CD4-positive, alpha-beta memory T cell (primary cell): ENCODE measurements at regions of chr10 and their contacts with region 1.

Region 1: DNA sequence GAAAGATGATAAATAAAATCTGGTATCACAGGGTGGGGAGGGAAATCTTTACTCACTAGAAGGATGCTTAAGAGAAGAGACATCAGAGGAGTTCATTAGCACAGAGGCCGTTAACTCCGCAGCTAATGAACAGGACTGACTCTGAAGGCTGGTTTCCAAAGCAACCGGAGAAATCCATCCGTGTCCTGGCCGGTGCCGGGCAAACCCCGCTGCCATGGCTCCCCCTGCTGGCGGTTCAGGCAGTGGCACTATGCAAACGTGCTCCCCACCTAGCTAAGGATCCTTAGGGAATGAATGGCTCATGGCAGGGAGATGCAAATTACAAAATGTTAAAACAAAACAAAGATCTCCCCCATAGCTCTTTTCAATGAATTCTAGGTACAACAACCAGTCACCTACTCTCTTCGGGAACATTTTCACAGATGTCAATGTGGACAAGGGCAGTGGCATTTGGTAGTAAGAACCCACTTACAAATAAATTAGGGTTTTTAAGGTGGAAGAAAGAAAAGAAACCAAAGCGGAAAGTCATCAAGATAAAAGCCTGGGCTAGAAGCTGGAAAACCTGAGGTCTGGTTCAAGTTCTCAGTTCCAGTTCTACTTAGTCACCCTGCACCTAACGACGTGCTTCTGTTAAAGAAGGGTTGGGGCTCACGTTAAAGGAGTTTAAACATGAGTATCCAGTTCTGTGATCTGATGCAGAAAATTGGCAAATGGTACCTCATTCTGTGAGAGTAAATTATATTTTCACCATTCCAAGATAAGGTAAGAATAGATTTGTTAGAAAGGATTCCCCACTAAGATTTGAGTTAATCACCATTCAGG is 138.2 kb downstream of the SVIL start:
- DNase-seq: peak in 4 of 5 donors; percentile 26 to 39 (median 28)
- H3K4me3 ChIP-seq: no peak overlapping the region
- H3K4me3 Mint-ChIP-seq: no peak overlapping the region
- H3K27ac ChIP-seq: no peak overlapping the region
- H3K27ac Mint-ChIP-seq: peak overlapping the region in 1 of 7 donors; percentile 36
- H3K4me1 ChIP-seq: no peaks in the 10 kb centered on the region
- H3K4me1 Mint-ChIP-seq: peaks cover 0 to 10% (median 5%) of the 10 kb centered on the region in 4 donors
- H3K27me3 ChIP-seq: no peaks in the 10 kb centered on the region
- H3K27me3 Mint-ChIP-seq: no peaks in the 10 kb centered on the region

Region 2: DNA sequence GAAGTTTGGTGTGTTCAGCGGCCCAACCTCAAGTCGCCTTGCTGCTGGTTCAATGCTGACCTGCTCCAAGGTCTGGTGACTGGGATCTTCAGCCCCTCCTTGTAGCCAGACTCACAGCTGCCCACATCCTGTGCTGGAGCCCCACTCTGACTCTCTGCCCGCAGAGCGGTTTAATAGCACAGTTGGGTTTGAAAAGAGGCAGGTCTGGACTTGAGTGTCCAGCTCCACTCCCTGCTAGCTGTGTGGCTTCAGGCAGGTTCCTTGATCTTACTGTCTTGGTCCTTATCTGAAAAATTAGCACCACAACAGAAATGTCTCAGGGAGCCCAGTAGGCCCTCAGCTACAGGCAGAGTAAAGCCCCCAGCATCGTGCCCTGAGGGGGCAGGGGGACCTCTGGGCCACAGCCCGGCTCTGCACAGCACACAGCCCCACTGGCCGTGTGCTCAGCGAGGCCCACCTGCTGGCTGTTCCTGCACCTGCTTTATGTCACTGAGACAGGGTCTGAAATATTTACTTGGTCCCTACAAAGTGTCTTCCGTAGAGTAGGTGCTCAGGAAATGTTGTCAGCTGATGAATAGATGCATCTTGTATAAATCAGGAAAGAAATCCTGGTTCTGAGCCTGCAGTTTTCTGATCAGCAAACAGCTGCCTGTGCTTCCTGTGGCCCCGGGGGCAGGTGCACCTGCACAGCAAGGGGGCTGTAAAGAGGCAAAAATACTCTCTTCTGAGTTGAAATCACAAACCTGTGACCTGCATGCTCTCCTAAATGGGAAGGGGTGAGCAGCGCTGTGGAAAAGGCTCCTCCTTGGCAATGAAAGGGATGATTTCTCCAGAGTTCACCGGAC is 17.2 kb before region 1 on chr10:
- CTCF ChIA-PET with region 1: interaction called, 10 read pairs
- POLR2A ChIA-PET with region 1: no interaction called
- intact Hi-C with region 1: no loop called
- DNase-seq: no peak
- H3K4me3 ChIP-seq: no peak overlapping the region
- H3K4me3 Mint-ChIP-seq: no peak overlapping the region
- H3K27ac ChIP-seq: no peak overlapping the region
- H3K27ac Mint-ChIP-seq: no peak overlapping the region
- H3K4me1 ChIP-seq: peaks cover 11% of the 10 kb centered on the region
- H3K4me1 Mint-ChIP-seq: peaks cover 5 to 18% (median 10%) of the 10 kb centered on the region in 4 donors
- H3K27me3 ChIP-seq: no peaks in the 10 kb centered on the region
- H3K27me3 Mint-ChIP-seq: no peaks in the 10 kb centered on the region

Region 3: DNA sequence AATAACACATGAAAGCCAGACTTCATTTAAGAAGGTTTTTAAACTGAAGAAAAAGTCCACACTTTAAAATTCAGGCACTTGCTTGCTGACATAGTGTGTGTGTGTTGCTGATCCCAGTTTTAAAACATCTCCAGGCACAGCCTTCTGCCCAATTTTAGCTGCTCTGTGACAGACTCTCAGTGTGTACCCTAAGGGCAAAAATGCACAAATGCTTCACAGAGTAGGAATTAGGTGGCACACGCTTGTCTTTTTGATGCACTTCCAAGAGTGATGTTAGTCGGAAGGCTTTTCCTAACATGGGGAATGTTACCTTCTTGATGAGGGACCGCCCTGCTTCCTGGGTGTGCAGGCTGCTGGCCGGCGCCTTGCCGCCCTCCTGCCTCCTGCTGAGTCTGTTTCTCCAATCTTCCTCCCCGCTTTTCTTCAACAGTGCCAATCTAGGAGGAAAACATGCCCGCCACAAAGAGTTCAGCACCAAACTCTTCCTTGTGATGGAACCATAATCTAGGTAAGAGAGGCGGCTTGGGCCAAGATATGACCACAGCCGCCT is 15.9 kb after region 1 on chr10:
- CTCF ChIA-PET with region 1: interaction called, 15 read pairs
- POLR2A ChIA-PET with region 1: no interaction called
- intact Hi-C with region 1: no loop called
- DNase-seq: no peak
- H3K4me3 ChIP-seq: no peak overlapping the region
- H3K4me3 Mint-ChIP-seq: no peak overlapping the region
- H3K27ac ChIP-seq: no peak overlapping the region
- H3K27ac Mint-ChIP-seq: no peak overlapping the region
- H3K4me1 ChIP-seq: no peaks in the 10 kb centered on the region
- H3K4me1 Mint-ChIP-seq: peaks cover 0 to 4% (median 1%) of the 10 kb centered on the region in 4 donors
- H3K27me3 ChIP-seq: no peaks in the 10 kb centered on the region
- H3K27me3 Mint-ChIP-seq: no peaks in the 10 kb centered on the region

Region 4: GRCh38 chr10:30018496-30018895 is 521.9 kb after region 1 on chr10:
- CTCF ChIA-PET with region 1: no interaction called
- POLR2A ChIA-PET with region 1: no interaction called
- intact Hi-C with region 1: no loop called
- DNase-seq: no peak
- H3K4me3 ChIP-seq: no peak overlapping the region
- H3K4me3 Mint-ChIP-seq: no peak overlapping the region
- H3K27ac ChIP-seq: no peak overlapping the region
- H3K27ac Mint-ChIP-seq: no peak overlapping the region
- H3K4me1 ChIP-seq: no peaks in the 10 kb centered on the region
- H3K4me1 Mint-ChIP-seq: peaks cover 0 to 2% (median under 1%) of the 10 kb centered on the region in 4 donors
- H3K27me3 ChIP-seq: no peaks in the 10 kb centered on the region
- H3K27me3 Mint-ChIP-seq: peaks cover 47 to 53% of the 10 kb centered on the region in 2 donors